Activated naive CD8-positive, alpha-beta T cell treated with anti-CD3 and anti-CD28 coated beads, Interleukin-2, amount 10 ng/mL, durations not matched to agents 7 days and 5 days (primary cell): ENCODE measurements at regions of chr12 and their contacts with region 1.

Region 1: GRCh38 chr12:48681738-48682532 is at the start of gene KANSL2:
- DNase-seq: peak; percentile 91
- ATAC-seq: peak; percentile 99
- H3K4me3 Mint-ChIP-seq: peak within 1 kb of the TSS; percentile 99
- H3K27ac Mint-ChIP-seq: peak within 1 kb of the TSS; percentile 97
- H3K4me1 Mint-ChIP-seq: peaks cover 38% of the 10 kb centered on the region
- H3K27me3 Mint-ChIP-seq: no peaks in the 10 kb centered on the region
- total RNA-seq, gene KANSL2: 62.1 to 65.7 TPM

Region 2: GRCh38 chr12:48580831-48581230 is 101.1 kb before region 1 on chr12:
- POLR2A ChIA-PET with region 1: no interaction called
- DNase-seq: no peak
- ATAC-seq: no peak
- H3K4me3 Mint-ChIP-seq: no peak overlapping the region
- H3K27ac Mint-ChIP-seq: no peak overlapping the region
- H3K4me1 Mint-ChIP-seq: peaks cover 3% of the 10 kb centered on the region
- H3K27me3 Mint-ChIP-seq: peaks cover 8% of the 10 kb centered on the region

Region 3: DNA sequence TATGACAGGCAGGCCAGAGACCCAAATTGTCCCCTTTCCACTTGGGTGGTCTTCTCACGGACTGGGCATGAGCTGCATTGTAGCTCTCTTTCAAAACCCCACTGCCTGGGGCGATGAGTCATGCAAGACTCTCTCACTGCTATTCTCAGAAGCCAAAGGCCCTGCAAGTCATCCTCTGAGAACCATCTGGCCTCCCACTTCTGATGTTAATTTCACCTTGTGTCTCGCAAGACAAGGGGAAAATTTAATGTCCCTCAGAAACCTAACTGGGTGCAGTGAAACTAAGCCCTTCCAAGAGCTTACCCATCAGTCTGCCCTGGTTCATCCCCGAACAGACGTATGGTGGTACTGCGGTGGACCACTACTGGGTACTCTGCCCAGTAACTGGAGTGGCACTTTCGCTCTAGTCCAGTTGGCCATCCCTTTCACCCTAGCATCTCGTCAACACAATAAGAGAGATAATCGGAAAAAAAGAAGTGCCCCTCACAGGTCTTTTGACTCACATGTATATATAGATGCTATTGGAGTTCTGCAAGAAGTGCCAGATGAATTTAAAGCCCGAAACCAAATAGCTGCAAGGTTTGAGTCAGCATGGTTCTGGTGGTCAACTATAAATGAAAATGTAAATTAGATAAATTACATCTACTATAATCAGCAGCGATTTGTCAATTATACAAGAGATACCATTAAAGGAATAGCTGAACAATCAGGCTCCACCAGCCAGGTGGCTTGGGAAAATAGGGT is 80.8 kb before region 1 on chr12:
- POLR2A ChIA-PET with region 1: no interaction called
- DNase-seq: no peak
- ATAC-seq: no peak
- H3K4me3 Mint-ChIP-seq: no peak overlapping the region
- H3K27ac Mint-ChIP-seq: no peak overlapping the region
- H3K4me1 Mint-ChIP-seq: peaks cover 2% of the 10 kb centered on the region
- H3K27me3 Mint-ChIP-seq: peaks cover 7% of the 10 kb centered on the region

Region 4: DNA sequence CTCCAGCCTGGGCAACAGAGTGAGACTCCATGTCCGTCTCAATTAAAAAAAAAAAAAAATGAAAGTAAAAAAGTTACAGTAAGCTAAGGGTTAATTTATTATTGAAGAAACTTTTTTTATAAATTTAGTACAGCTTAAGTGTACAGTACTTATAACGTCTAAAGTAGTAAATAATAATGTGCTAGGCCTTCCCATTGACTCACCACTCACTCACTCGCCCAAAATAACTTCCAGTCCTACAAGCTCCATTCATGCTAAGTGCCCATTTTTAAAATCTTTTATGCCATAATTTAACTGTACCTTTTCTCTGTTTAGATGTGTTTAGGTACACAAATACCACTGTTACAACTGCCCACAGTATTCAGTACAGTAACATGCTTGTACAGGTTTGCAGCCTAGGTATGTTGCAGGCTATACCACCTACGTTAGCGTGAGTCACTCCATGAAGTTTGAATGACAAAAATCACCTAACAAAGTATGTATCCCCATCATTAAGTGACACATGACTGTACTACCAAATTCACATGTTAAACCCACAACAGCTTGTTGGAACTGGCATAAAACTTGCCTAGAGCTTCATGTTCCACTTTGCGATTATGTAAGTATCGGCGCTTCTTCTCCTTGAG is 10.6 kb before region 1 on chr12:
- POLR2A ChIA-PET with region 1: interaction called, 11 read pairs
- DNase-seq: no peak
- ATAC-seq: no peak
- H3K4me3 Mint-ChIP-seq: no peak overlapping the region
- H3K27ac Mint-ChIP-seq: no peak overlapping the region
- H3K4me1 Mint-ChIP-seq: peaks cover 2% of the 10 kb centered on the region
- H3K27me3 Mint-ChIP-seq: no peaks in the 10 kb centered on the region

Region 5: GRCh38 chr12:48716493-48717251 is 34.7 kb after region 1 on chr12 and contains the start of gene CCNT1:
- POLR2A ChIA-PET with region 1: interaction called, 13 read pairs
- DNase-seq: peak; percentile 95
- ATAC-seq: peak; percentile 96
- H3K4me3 Mint-ChIP-seq: peak within 1 kb of the TSS; percentile 94
- H3K27ac Mint-ChIP-seq: peak within 1 kb of the TSS; percentile 98
- H3K4me1 Mint-ChIP-seq: peaks cover 29% of the 10 kb centered on the region
- H3K27me3 Mint-ChIP-seq: no peaks in the 10 kb centered on the region
- total RNA-seq, gene CCNT1: 58.7 to 60.4 TPM

Region 6: DNA sequence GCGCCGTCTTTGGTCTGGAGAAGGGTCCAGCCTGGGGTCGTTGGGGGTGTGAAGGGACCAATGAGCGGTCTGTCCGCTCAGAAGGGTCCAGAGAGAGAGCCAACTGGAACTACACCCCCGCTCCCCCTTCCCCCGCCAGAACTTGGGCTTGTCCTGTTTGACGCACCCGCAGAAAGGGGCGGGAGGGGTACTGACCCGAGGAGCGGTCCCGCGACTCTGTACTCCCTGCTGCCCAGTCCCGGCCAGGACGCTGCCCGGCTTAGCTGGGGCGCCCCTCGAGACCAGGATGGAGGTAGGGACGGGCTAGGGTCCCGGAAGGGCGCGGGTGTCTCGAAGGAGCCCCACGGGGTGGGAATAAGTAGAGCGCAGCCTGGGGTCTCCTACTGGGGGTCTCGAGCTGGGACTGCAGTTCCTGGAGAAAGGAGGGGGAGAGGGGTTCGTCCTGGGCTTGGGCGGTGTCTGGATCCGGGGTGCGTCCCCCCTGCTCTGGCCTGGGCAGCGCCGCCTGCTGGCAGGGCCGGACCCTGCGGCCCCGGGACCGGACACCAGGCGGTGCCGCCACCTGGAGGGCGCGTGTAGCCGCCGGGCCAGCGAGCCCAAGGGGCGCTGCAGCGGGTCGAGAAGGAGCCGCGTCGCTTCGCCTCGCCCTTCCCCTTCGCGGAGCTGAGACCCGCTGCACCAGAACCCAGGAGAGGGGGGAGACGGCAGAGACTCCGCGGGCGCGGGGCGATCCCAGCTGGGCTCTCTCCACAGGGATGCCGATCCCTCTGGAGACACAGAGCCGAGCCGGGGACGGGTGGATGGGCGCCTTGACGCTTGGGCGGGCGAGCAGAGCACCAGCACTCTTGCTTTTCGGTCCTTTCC is 132.6 kb after region 1 on chr12:
- POLR2A ChIA-PET with region 1: interaction called, 10 read pairs
- DNase-seq: peak; percentile 94
- ATAC-seq: peak; percentile 75
- H3K4me3 Mint-ChIP-seq: peak overlapping the region; percentile 94
- H3K27ac Mint-ChIP-seq: peak overlapping the region; percentile 79
- H3K4me1 Mint-ChIP-seq: peaks cover 24% of the 10 kb centered on the region
- H3K27me3 Mint-ChIP-seq: peaks cover 33% of the 10 kb centered on the region